Heart right ventricle (tissue), 16 donors: ENCODE measurements at regions of chr14 and their contacts with region 1.

Region 1: GRCh38 chr14:90003908-90004307 is 48.2 kb downstream of the TDP1 start:
- DNase-seq: no peak
- ATAC-seq: no peak
- H3K4me3 ChIP-seq: no peak overlapping the region
- H3K27ac ChIP-seq: no peak overlapping the region
- H3K4me1 ChIP-seq: no peaks in the 10 kb centered on the region
- H3K27me3 ChIP-seq: no peaks in the 10 kb centered on the region
- CTCF ChIP-seq: no peak

Region 2: GRCh38 chr14:89911010-89911919 is 92.6 kb before region 1 on chr14:
- intact Hi-C with region 1: no loop called
- DNase-seq: no peak
- ATAC-seq: peak in 5 of 8 donors; percentile 50 to 59 (median 56)
- H3K4me3 ChIP-seq: no peak overlapping the region
- H3K27ac ChIP-seq: no peak overlapping the region
- H3K4me1 ChIP-seq: peaks cover 0 to 14% (median 0%) of the 10 kb centered on the region in 9 donors
- H3K27me3 ChIP-seq: no peaks in the 10 kb centered on the region
- CTCF ChIP-seq: no peak

Region 3: GRCh38 chr14:89973234-89973823 is 30.6 kb before region 1 on chr14:
- intact Hi-C with region 1: no loop called
- DNase-seq: peak; percentile 40 to 52
- ATAC-seq: peak; percentile 66 to 88 (median 82)
- H3K4me3 ChIP-seq: no peak overlapping the region
- H3K27ac ChIP-seq: no peak overlapping the region
- H3K4me1 ChIP-seq: no peaks in the 10 kb centered on the region
- H3K27me3 ChIP-seq: no peaks in the 10 kb centered on the region
- CTCF ChIP-seq: peak; percentile 40 to 90 (median 87)

Region 4: GRCh38 chr14:91138511-91139359 is 1134.8 kb after region 1 on chr14:
- intact Hi-C with region 1: loop called in 1 of 10 experiments (anchors 5 kb)
- DNase-seq: no peak
- ATAC-seq: peak in 2 of 8 donors; percentile 9 to 21
- H3K4me3 ChIP-seq: no peak overlapping the region
- H3K27ac ChIP-seq: no peak overlapping the region
- H3K4me1 ChIP-seq: peaks cover 5 to 61% (median 22%) of the 10 kb centered on the region in 9 donors
- H3K27me3 ChIP-seq: no peaks in the 10 kb centered on the region
- CTCF ChIP-seq: peak; percentile 17 to 60 (median 47)